ENCODE measurements at regions of chr22 and their contacts with region 1.

Region 1: DNA sequence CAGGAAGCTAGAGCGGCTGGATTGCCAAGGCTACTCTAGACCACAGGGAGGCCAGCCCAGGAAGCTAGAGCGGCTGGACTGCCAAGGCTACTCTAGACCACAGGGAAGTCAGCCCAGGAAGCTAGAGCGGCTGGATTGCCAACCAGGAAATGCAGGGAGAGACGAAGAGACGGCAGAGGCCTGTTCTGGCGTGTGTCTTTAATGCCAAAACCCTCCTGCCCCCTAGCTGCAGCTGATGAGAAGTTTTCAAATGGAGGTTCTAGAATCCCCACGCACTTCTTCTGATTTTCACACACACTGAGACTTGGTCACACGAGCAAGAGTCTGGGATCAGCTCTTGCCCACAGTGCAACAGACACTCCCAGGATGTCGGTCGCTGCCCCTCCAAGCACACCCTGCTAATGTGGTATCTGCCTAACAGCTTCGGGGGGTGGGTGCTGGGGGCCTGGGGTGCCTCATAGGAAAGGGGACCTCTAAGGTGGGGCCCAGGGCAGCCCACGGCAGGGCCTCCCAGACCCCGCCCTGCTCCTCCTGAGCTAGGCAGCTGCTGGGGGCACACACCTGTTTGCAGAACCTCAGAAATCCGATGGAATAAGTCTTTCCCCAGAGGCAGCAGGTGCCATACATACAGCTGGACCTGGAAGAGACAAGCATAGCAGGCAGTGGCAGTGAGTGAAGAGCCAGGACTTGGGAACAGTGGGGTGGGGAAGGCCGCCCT is 28.5 kb downstream of the MAFF start:
- DNase-seq: peak; percentile 48
- ATAC-seq: no peak
- H3K4me3 ChIP-seq: no peak overlapping the region
- H3K4me3 Mint-ChIP-seq: no peak overlapping the region
- H3K27ac ChIP-seq: no peak overlapping the region
- H3K27ac Mint-ChIP-seq: no peak overlapping the region
- H3K4me1 ChIP-seq: no peaks in the 10 kb centered on the region
- H3K4me1 Mint-ChIP-seq: no peaks in the 10 kb centered on the region
- H3K27me3 ChIP-seq: no peaks in the 10 kb centered on the region
- H3K27me3 Mint-ChIP-seq: no peaks in the 10 kb centered on the region
- CTCF ChIP-seq: peak; percentile 35

Region 2: DNA sequence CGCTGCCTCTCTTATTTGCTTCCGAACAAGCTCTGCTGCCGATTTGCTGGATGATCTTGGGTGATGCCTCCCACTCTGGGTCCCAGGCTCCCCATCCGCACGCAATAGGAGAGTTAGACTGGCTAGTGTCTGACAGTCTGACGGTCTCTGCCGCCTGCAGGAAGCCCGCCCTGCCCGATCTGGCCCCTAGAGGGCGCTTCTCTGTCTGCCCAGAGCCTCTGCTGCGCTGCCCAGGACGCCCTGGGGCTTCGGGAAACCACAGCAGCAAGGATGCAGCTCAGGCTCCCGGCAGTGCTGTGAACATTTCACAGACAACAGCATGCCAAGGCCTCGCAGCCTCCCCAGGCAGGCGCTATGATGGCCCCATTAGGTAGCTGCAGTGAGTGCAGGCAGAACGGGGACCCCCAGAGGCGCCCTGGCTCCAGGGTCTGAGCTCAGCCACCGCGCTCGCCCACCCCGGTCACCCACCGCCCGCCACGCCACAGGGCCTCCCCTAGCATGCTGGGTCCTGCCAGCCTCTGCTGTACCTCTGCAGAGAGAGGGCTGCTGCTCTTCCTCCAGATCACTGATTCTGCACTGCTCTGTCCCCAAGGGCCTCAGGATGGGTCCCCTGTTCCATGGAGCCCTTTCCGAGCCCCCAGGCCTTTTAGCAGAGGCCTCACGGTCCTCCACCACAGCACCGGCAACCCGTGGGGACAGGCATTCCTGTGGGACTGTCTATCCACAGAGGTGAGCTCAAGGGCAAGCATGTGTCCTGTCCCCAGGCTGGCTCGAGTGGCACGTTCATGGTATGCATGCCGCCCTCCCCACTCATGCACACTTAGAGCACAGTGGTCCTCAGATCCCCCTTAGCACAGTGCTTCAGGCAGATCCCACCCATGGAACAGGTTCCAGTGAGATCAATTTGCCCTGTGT is 115.5 kb before region 1 on chr22:
- CTCF ChIA-PET with region 1: interaction called, 25 read pairs
- POLR2A ChIA-PET with region 1: interaction called, 3 read pairs
- intact Hi-C with region 1: no loop called
- DNase-seq: peak; percentile 76
- ATAC-seq: peak; percentile 86
- H3K4me3 ChIP-seq: no peak overlapping the region
- H3K4me3 Mint-ChIP-seq: no peak overlapping the region
- H3K27ac ChIP-seq: no peak overlapping the region
- H3K27ac Mint-ChIP-seq: no peak overlapping the region
- H3K4me1 ChIP-seq: peaks cover 0 to 3% of the 10 kb centered on the region in 2 donors
- H3K4me1 Mint-ChIP-seq: peaks cover 2% of the 10 kb centered on the region
- H3K27me3 ChIP-seq: no peaks in the 10 kb centered on the region
- H3K27me3 Mint-ChIP-seq: no peaks in the 10 kb centered on the region
- CTCF ChIP-seq: peak; percentile 86

Measured in B cell (primary cell).